ENCODE measurements at regions of chr19 and their contacts with region 1.

Region 1: DNA sequence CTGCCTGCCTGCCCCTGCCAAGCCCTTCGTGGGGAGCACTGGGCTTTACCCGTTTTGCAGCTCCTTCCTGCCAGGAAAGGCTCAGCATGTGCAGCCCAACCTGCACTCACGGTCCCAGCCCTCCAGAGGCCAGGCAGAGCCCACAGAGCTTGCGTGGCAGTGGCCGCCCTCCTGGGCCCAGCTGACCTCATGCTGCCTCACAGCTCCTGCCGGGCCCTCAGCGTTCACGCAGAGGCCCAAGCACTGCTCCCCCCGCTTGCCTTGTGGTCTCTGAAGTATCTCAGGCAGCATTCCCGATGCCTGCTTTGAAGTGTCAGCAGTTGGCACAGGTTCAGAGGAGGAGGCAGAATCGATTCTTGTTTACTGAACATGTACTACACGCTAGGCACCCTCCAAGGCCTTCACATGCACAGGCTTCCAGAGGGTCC is 32.5 kb downstream of the CAPN12 start:
- DNase-seq: peak in 4 of 5 donors; percentile 55 to 82 (median 78)
- ATAC-seq: peak; percentile 10 to 69 (median 36)
- H3K4me3 ChIP-seq: no peak overlapping the region
- H3K27ac ChIP-seq: peak overlapping the region; percentile 69 to 98 (median 84)
- H3K4me1 ChIP-seq: peaks cover 49 to 100% (median 84%) of the 10 kb centered on the region in 12 donors
- H3K27me3 ChIP-seq: no peaks in the 10 kb centered on the region
- CTCF ChIP-seq: no peak
- POLR2A ChIP-seq: no peak

Region 2: GRCh38 chr19:38658462-38659306 is 53.1 kb before region 1 on chr19:
- intact Hi-C with region 1: loop called in 5 of 10 experiments (anchors 5 kb)
- DNase-seq: peak in 1 of 5 donors; percentile 66
- ATAC-seq: peak; percentile 74 to 83 (median 76)
- H3K4me3 ChIP-seq: peak overlapping the region in 5 of 12 donors; percentile 3 to 38 (median 15)
- H3K27ac ChIP-seq: peak overlapping the region; percentile 71 to 99 (median 96)
- H3K4me1 ChIP-seq: peaks cover 55 to 100% (median 99%) of the 10 kb centered on the region in 12 donors
- H3K27me3 ChIP-seq: no peaks in the 10 kb centered on the region
- CTCF ChIP-seq: no peak
- POLR2A ChIP-seq: no peak

Region 3: GRCh38 chr19:38666663-38667511 is 44.9 kb before region 1 on chr19:
- intact Hi-C with region 1: loop called in 2 of 10 experiments (anchors 5 kb)
- DNase-seq: peak in 4 of 5 donors; percentile 59 to 75 (median 70)
- ATAC-seq: peak in 3 of 4 donors; percentile 29 to 52 (median 48)
- H3K4me3 ChIP-seq: peak overlapping the region in 1 of 12 donors; percentile 19
- H3K27ac ChIP-seq: peak overlapping the region; percentile 88 to 99 (median 96)
- H3K4me1 ChIP-seq: peaks cover 57 to 100% (median 100%) of the 10 kb centered on the region in 12 donors
- H3K27me3 ChIP-seq: no peaks in the 10 kb centered on the region
- CTCF ChIP-seq: no peak
- POLR2A ChIP-seq: no peak